H1 (cell line): ENCODE measurements at regions of chr9 and their contacts with region 1.

Region 1: DNA sequence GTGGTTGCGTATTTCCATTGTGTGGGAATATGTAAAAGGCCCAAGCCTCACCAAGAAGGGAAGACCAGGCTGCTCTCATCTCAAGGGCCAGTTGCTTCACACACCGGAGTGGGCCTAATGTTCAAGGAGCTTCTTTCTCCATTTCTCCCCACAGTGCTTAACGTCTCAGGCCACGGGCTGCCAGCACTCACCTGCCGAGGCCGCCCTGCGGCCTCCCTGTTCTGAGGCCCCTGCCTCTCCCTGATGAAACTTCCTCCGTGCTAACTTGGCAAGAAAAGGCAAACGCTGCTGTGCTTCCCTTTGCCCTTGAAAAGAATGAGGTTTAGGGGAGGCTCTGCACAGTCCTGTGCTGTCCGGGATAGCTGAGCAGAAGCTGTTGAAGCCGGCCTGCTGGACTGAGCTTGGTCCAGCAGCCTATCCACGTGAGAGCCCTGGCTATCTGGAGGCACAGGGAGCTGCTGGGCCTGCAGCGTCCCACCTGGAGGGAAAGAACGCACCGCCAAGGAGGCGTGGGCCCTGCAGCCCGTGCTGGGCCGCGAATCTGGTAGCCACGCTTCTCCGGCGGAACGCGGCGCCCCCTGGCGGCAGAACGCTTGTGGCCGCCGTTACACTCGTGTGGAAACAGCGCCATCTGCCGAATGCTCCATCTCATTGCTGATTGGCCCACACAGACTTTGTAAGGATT is 73.5 kb upstream of the PRSS3 start:
- DNase-seq: peak; percentile 61 to 98
- H3K4me3 ChIP-seq: no peak overlapping the region
- H3K27ac ChIP-seq: no peak overlapping the region
- H3K4me1 ChIP-seq: peaks cover 0 to 1% (median 0%) of the 10 kb centered on the region in 4 experiments; a peak in 2 of 7 replicates
- H3K27me3 ChIP-seq: peaks cover 0 to 5% (median 3%) of the 10 kb centered on the region in 4 experiments; a peak in 3 of 7 replicates
- CTCF ChIP-seq: peak; percentile 97 to 100 (median 100)
- EP300 ChIP-seq: no peak
- POLR2A ChIP-seq: no peak
- RAD21 ChIP-seq: peak; percentile 98

Region 2: DNA sequence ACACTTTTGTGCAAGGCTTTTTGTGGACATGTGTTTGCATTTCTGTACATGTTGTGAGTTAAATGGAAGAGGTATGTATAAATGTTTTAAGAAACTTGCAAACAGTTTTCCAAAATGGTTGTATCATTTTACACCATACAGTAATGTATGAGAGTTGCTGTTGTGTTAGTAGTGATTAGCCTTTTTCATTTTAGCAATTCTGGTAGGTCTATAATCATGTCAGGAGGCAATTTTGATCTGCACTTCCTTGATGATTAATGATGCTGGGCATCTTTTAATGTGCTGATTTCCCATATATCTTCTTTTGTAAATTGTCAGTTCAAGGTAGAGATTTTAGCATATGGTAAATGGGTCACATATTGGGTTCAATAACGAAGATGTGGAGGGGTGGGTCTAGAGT is 110.5 kb before region 1 on chr9:
- CTCF ChIA-PET with region 1: interaction called, 402 read pairs
- POLR2A ChIA-PET with region 1: no interaction called
- DNase-seq: no peak
- H3K4me3 ChIP-seq: no peak overlapping the region
- H3K27ac ChIP-seq: no peak overlapping the region
- H3K4me1 ChIP-seq: no peaks in the 10 kb centered on the region
- H3K27me3 ChIP-seq: no peaks in the 10 kb centered on the region
- CTCF ChIP-seq: no peak
- EP300 ChIP-seq: no peak
- POLR2A ChIP-seq: no peak
- RAD21 ChIP-seq: no peak

Region 3: GRCh38 chr9:33628865-33629410 is 92.9 kb before region 1 on chr9:
- CTCF ChIA-PET with region 1: interaction called, 402 read pairs
- POLR2A ChIA-PET with region 1: interaction called, 8 read pairs
- DNase-seq: no peak
- H3K4me3 ChIP-seq: no peak overlapping the region
- H3K27ac ChIP-seq: no peak overlapping the region
- H3K4me1 ChIP-seq: no peaks in the 10 kb centered on the region
- H3K27me3 ChIP-seq: no peaks in the 10 kb centered on the region
- CTCF ChIP-seq: no peak
- EP300 ChIP-seq: no peak
- POLR2A ChIP-seq: no peak
- RAD21 ChIP-seq: no peak

Region 4: DNA sequence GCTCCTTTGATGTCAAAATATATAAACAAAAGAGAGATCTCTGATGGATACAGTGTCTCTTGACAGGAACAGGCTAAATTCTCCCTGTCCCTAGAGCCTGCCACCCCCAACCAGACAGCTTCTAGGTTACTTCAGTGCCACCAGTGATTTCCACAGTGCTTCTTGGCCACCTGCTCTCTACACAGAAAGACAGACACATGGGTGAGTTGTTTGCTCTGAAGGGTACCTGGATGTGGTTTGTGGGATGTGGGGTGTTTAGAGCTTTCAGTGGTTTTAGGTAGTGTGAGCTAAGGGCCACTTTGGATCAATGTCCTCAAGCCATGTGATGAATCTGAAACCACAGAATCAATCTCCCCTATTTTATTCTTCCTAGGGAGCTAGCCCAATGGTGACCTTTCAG is 72.4 kb before region 1 on chr9:
- CTCF ChIA-PET with region 1: interaction called, 104 read pairs
- POLR2A ChIA-PET with region 1: no interaction called
- DNase-seq: no peak
- H3K4me3 ChIP-seq: no peak overlapping the region
- H3K27ac ChIP-seq: no peak overlapping the region
- H3K4me1 ChIP-seq: no peaks in the 10 kb centered on the region
- H3K27me3 ChIP-seq: no peaks in the 10 kb centered on the region
- CTCF ChIP-seq: no peak
- EP300 ChIP-seq: no peak
- POLR2A ChIP-seq: no peak
- RAD21 ChIP-seq: no peak

Region 5: DNA sequence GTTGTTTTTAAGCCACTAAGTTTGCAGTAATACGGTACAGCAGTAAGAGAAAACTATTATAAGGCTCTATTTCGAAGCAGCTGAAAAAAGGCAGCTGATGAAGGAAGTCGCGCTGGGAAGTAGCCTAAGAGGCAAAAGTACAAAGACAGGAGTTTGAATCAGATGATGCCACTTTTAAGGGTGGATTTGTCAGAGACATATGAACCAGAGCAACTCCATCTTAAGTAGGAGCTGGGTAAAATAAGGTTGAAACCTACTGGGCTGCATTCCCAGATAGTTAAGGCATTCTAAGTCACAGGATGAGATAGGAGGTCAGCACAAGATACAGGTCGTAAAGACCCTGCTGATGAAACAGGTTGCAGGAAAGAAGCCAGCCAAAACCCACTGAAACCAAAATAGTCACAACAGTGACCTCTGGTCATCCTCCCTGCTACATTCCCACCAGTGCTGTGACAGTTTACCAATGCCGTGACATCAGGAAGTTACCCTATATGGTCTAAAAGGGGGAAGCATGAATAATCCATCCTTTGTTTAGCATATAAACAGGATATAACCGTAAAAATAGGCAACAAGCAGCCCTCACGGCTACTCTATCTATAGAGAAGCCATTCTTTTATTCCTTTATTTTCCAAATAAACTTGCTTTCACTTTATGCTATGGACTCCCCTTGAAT is 18.2 kb before region 1 on chr9:
- CTCF ChIA-PET with region 1: interaction called, 50 read pairs
- POLR2A ChIA-PET with region 1: no interaction called
- DNase-seq: no peak
- H3K4me3 ChIP-seq: no peak overlapping the region
- H3K27ac ChIP-seq: no peak overlapping the region
- H3K4me1 ChIP-seq: no peaks in the 10 kb centered on the region
- H3K27me3 ChIP-seq: no peaks in the 10 kb centered on the region
- CTCF ChIP-seq: no peak
- EP300 ChIP-seq: no peak
- POLR2A ChIP-seq: no peak
- RAD21 ChIP-seq: no peak